ENCODE measurements at regions of chr11 and their contacts with region 1.

Region 1: GRCh38 chr11:129785383-129786111 is 30.1 kb upstream of the TMEM45B start:
- DNase-seq: peak in 6 of 9 donors; percentile 8 to 33 (median 24)
- ATAC-seq: no peak
- H3K4me3 ChIP-seq: no peak overlapping the region
- H3K4me3 Mint-ChIP-seq: no peak overlapping the region
- H3K27ac ChIP-seq: no peak overlapping the region
- H3K27ac Mint-ChIP-seq: peak overlapping the region in 2 of 9 donors; percentile 26 to 74
- H3K4me1 ChIP-seq: no peaks in the 10 kb centered on the region
- H3K4me1 Mint-ChIP-seq: peaks cover 6 to 24% (median 13%) of the 10 kb centered on the region in 7 donors
- H3K27me3 ChIP-seq: no peaks in the 10 kb centered on the region
- H3K27me3 Mint-ChIP-seq: peaks cover 0 to 3% (median 0%) of the 10 kb centered on the region in 5 donors

Region 2: DNA sequence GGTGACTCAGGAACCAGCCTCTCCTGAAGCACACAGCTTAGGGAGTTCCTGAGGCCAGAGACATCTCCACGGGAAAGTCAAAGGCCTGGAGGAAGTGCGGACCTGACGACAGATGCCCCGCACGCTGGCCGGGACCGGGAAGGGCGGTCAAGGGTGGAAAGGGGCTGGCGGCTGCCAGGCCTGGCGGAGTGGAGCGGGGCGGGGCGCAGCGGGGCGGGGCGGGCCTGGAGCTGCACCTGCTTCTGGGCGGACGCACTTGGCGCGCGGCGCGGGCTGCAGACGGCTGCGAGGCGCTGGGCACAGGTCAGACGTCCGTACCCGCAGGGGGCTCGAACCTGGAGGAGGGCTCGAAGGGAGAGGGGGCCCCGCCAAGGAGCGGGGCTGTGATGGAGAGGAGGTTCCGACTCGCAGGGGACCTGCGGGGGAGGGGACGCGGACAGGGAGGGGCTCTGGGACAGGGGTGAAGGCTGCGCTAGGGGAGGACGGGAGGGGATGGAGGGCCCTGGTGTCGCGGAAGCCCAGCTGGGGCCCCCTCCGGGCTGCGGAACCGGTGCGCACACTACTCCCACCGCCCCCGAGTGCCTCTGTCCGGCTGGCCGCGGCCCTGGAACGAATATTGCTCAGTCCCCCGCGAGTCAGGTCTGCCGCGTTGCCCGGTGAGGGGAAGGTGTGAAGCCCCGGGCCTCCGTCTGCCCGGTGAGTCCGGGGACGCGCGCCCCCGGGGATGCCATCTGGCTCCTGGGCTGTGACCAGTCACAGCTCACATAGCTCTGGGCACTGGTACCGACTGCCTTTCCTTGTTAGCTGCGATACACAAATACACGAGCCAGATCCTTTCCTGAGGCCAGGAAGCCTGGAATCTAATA is 30.3 kb after region 1 on chr11 and contains the start of gene TMEM45B:
- CTCF ChIA-PET with region 1: interaction called, 3 read pairs
- POLR2A ChIA-PET with region 1: interaction called, 8 read pairs
- intact Hi-C with region 1: loop called in 1 of 2 experiments (anchors 2 kb)
- DNase-seq: peak; percentile 27 to 57 (median 45)
- ATAC-seq: peak; percentile 38
- H3K4me3 ChIP-seq: peak within 1 kb of the TSS; percentile 54
- H3K4me3 Mint-ChIP-seq: peak within 1 kb of the TSS; percentile 83 to 91 (median 88)
- H3K27ac ChIP-seq: peak within 1 kb of the TSS; percentile 31
- H3K27ac Mint-ChIP-seq: peak within 1 kb of the TSS; percentile 84 to 99 (median 95)
- H3K4me1 ChIP-seq: peaks cover 5 to 9% of the 10 kb centered on the region in 2 donors
- H3K4me1 Mint-ChIP-seq: peaks cover 29 to 79% (median 61%) of the 10 kb centered on the region in 7 donors
- H3K27me3 ChIP-seq: no peaks in the 10 kb centered on the region
- H3K27me3 Mint-ChIP-seq: peaks cover 0 to 75% (median 17%) of the 10 kb centered on the region in 5 donors
- total RNA-seq, gene TMEM45B: 2.3 to 40.8 (median 3.6) TPM

Region 3: DNA sequence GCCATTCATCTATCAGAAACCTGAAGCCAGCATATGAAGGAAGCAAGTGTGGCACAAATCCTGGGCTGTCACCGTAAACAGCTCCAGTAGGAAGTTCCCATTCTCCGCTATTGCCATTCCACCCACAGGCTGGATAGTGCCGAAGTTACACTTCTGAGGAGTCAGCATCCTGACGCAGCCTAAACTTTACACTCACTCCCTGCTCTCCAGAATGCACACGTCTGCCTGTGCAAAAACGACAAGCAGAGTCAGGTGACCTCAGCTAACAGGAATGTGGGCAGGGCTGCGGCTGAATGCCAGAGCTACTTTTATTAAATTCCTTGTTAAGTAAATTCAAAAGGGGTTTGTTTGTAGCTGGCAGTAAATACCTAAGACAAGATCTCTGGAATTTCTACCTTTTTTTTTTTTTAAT is 76.2 kb after region 1 on chr11:
- CTCF ChIA-PET with region 1: interaction called, 5 read pairs
- POLR2A ChIA-PET with region 1: interaction called, 6 read pairs
- intact Hi-C with region 1: loop called in 1 of 2 experiments (anchors 5 kb)
- DNase-seq: no peak
- ATAC-seq: no peak
- H3K4me3 ChIP-seq: no peak overlapping the region
- H3K4me3 Mint-ChIP-seq: peak overlapping the region in 3 of 10 donors; percentile 22 to 69 (median 58)
- H3K27ac ChIP-seq: peak overlapping the region; percentile 25
- H3K27ac Mint-ChIP-seq: peak overlapping the region; percentile 84 to 98 (median 95)
- H3K4me1 ChIP-seq: peaks cover 0 to 37% of the 10 kb centered on the region in 2 donors
- H3K4me1 Mint-ChIP-seq: peaks cover 19 to 70% (median 54%) of the 10 kb centered on the region in 7 donors
- H3K27me3 ChIP-seq: no peaks in the 10 kb centered on the region
- H3K27me3 Mint-ChIP-seq: no peaks in the 10 kb centered on the region

Region 4: GRCh38 chr11:129895126-129896041 is 109.8 kb after region 1 on chr11 and contains the start of gene NFRKB:
- CTCF ChIA-PET with region 1: interaction called, 3 read pairs
- POLR2A ChIA-PET with region 1: interaction called, 8 read pairs
- intact Hi-C with region 1: loop called in 1 of 2 experiments (anchors 1 kb)
- DNase-seq: peak; percentile 75 to 95 (median 88)
- ATAC-seq: peak; percentile 99
- H3K4me3 ChIP-seq: peak within 1 kb of the TSS; percentile 76
- H3K4me3 Mint-ChIP-seq: peak within 1 kb of the TSS; percentile 86 to 96 (median 92)
- H3K27ac ChIP-seq: peak within 1 kb of the TSS; percentile 84
- H3K27ac Mint-ChIP-seq: peak within 1 kb of the TSS; percentile 82 to 95 (median 90)
- H3K4me1 ChIP-seq: peaks cover 9 to 18% of the 10 kb centered on the region in 2 donors
- H3K4me1 Mint-ChIP-seq: peaks cover 23 to 58% (median 44%) of the 10 kb centered on the region in 7 donors
- H3K27me3 ChIP-seq: no peaks in the 10 kb centered on the region
- H3K27me3 Mint-ChIP-seq: no peaks in the 10 kb centered on the region
- total RNA-seq, gene NFRKB: 40.4 to 81.3 (median 56.2) TPM

Region 5: DNA sequence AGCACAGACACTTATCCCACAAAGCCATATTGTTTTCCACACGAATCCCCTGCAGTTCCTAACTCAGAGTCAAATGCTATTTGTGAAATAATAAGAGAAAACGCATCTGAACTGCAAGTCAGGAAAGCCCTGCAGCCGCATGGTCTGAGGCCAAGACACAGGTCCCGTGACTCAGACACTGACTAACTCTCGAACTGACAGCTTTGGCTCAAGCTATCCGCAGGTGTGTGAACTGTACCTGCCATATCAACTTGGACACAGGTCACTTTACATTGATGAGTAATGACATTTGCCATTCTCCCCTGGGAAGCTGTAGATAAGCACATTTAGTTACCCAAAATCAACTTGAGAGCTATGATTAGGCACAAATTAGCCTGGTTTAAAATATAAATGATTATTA is 144.7 kb after region 1 on chr11:
- CTCF ChIA-PET with region 1: interaction called, 10 read pairs
- POLR2A ChIA-PET with region 1: interaction called, 5 read pairs
- intact Hi-C with region 1: no loop called
- DNase-seq: no peak
- ATAC-seq: peak; percentile 54
- H3K4me3 ChIP-seq: no peak overlapping the region
- H3K4me3 Mint-ChIP-seq: no peak overlapping the region
- H3K27ac ChIP-seq: no peak overlapping the region
- H3K27ac Mint-ChIP-seq: no peak overlapping the region
- H3K4me1 ChIP-seq: no peaks in the 10 kb centered on the region
- H3K4me1 Mint-ChIP-seq: no peaks in the 10 kb centered on the region
- H3K27me3 ChIP-seq: no peaks in the 10 kb centered on the region
- H3K27me3 Mint-ChIP-seq: no peaks in the 10 kb centered on the region

Region 6: GRCh38 chr11:130069684-130070108 is 284.1 kb after region 1 on chr11 and contains the start of gene APLP2:
- CTCF ChIA-PET with region 1: no interaction called
- POLR2A ChIA-PET with region 1: no interaction called
- intact Hi-C with region 1: loop called in 1 of 2 experiments (anchors 2 kb)
- DNase-seq: peak; percentile 93 to 98 (median 95)
- ATAC-seq: peak; percentile 96
- H3K4me3 ChIP-seq: peak within 1 kb of the TSS; percentile 87
- H3K4me3 Mint-ChIP-seq: peak within 1 kb of the TSS; percentile 94 to 99 (median 96)
- H3K27ac ChIP-seq: peak within 1 kb of the TSS; percentile 89
- H3K27ac Mint-ChIP-seq: peak within 1 kb of the TSS; percentile 92 to 97 (median 95)
- H3K4me1 ChIP-seq: peaks cover 3 to 5% of the 10 kb centered on the region in 2 donors
- H3K4me1 Mint-ChIP-seq: peaks cover 19 to 33% (median 21%) of the 10 kb centered on the region in 7 donors
- H3K27me3 ChIP-seq: peaks cover 0 to 3% of the 10 kb centered on the region in 2 donors
- H3K27me3 Mint-ChIP-seq: peaks cover 0 to 29% (median 0%) of the 10 kb centered on the region in 5 donors
- total RNA-seq, gene APLP2: 26.6 to 172 (median 51.5) TPM

Measured in naive thymus-derived CD4-positive, alpha-beta T cell (primary cell).